OCI-LY7 (cell line): ENCODE measurements at regions of chr1 and their contacts with region 1.

Region 1: DNA sequence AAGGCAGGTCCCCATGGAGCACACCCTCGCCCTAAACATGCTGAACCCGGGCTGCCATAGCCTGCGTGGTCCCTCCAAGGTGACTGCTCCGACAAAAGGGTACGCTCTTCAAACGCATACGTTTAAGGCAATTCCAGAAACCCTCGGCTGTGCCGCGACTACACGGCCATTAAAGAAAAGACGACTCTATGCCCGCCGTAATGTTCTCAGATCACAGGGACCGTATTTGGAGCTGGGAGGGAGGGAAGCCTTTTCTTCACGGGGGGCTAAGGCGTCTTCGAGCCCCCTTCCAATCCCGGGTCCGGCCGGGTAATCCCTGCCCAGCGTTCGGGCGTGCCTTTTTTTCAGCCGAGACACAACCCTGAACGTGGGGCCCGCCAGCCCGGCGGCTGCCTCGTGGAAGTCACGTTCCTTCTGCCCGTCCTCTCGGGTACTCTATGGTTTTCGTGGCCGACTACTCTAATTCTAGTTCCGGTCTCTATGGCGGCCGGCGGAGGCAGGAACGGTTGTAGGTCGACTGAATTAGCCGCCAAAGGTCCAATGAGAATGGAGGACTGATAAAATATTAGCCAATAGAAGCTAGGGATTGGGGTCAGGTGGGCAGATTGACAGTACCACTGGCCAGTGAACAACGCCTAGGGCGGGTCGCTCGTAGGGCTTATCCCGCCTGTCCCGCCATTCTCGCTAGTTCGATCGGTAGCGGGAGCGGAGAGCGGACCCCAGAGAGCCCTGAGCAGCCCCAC is at the start of gene YBX1:
- DNase-seq: peak; percentile 99
- H3K4me3 ChIP-seq: peak within 1 kb of the TSS; percentile 84
- H3K27ac ChIP-seq: peak within 1 kb of the TSS; percentile 63
- H3K4me1 ChIP-seq: peaks cover 47% of the 10 kb centered on the region
- CTCF ChIP-seq: no peak
- total RNA-seq, gene YBX1: 750 and 887 TPM in 2 replicates

Region 2: GRCh38 chr1:42657971-42658879 is 23.7 kb before region 1 on chr1 and contains the start of gene PPIH:
- CTCF ChIA-PET with region 1: no interaction called
- POLR2A ChIA-PET with region 1: interaction called, 8 read pairs
- intact Hi-C with region 1: loop called (anchors 1 kb)
- DNase-seq: peak; percentile 95
- H3K4me3 ChIP-seq: peak within 1 kb of the TSS; percentile 87
- H3K27ac ChIP-seq: peak within 1 kb of the TSS; percentile 56
- H3K4me1 ChIP-seq: peaks cover 28% of the 10 kb centered on the region
- CTCF ChIP-seq: 0 out of 2 replicates have a peak, but pooled peaks have one; percentile 18
- total RNA-seq, gene PPIH: 74.4 and 95.7 TPM in 2 replicates

Region 3: GRCh38 chr1:42736150-42736850 is 54.4 kb after region 1 on chr1:
- CTCF ChIA-PET with region 1: no interaction called
- POLR2A ChIA-PET with region 1: no interaction called
- intact Hi-C with region 1: no loop called
- DNase-seq: peak; percentile 13
- H3K4me3 ChIP-seq: no peak overlapping the region
- H3K27ac ChIP-seq: no peak overlapping the region
- H3K4me1 ChIP-seq: peaks cover 11% of the 10 kb centered on the region
- CTCF ChIP-seq: peak; percentile 25; the same call in 1 of the 2 replicates

Region 4: DNA sequence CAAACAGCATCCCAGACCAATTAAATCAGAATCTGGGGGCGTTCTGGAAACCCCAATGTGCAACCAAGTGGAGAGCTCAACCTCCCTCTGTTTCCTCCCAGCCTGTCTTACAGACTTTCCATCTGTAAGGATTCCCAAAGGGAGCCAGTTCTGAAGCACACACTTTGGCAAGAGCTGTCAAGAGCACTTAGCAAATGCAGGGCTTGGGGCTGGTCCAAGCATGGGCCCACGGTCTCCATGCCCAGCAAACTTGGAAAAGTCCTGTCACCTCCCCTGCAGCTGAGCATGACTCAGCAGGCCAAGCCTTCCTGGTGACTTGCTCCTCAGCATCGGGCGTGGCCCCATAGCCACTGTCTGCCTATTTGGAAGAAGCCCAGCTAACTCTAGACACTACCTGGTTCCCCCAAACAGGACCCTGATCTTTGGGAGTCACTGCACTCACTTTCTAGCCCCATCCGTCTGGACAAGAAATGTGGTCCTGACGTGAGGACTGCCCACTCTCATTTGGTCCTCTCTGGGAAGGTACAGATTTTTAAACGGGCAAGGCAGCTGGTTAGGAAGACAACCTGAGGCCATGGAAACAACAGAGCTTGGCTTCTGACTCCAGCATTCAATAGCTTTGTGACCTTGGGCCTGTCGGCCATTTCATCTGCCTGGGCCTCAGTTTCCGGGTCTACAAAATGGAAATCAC is 259.9 kb after region 1 on chr1:
- CTCF ChIA-PET with region 1: no interaction called
- POLR2A ChIA-PET with region 1: no interaction called
- intact Hi-C with region 1: loop called (anchors 5 kb)
- DNase-seq: no peak
- H3K4me3 ChIP-seq: peak overlapping the region; percentile 15
- H3K27ac ChIP-seq: peak overlapping the region; percentile 93
- H3K4me1 ChIP-seq: peaks cover 84% of the 10 kb centered on the region
- CTCF ChIP-seq: no peak